Activated naive CD4-positive, alpha-beta T cell treated with anti-CD3 and anti-CD28 coated beads for 36 hours (primary cell): ENCODE measurements at regions of chr22 and their contacts with region 1.

Region 1: GRCh38 chr22:38506118-38506962 is at the start of gene DDX17:
- DNase-seq: peak; percentile 97
- H3K4me3 Mint-ChIP-seq: peak within 1 kb of the TSS; percentile 98
- H3K27ac Mint-ChIP-seq: peak within 1 kb of the TSS; percentile 100
- H3K4me1 Mint-ChIP-seq: peaks cover 36% of the 10 kb centered on the region
- H3K27me3 Mint-ChIP-seq: no peaks in the 10 kb centered on the region
- total RNA-seq, gene DDX17: 319 to 341 TPM

Region 2: GRCh38 chr22:38490915-38491314 is 15.4 kb before region 1 on chr22:
- CTCF ChIA-PET with region 1: no interaction called
- intact Hi-C with region 1: loop called (anchors 1 kb)
- DNase-seq: no peak
- H3K4me3 Mint-ChIP-seq: no peak overlapping the region
- H3K27ac Mint-ChIP-seq: peak overlapping the region; percentile 87
- H3K4me1 Mint-ChIP-seq: peaks cover 70% of the 10 kb centered on the region
- H3K27me3 Mint-ChIP-seq: no peaks in the 10 kb centered on the region

Region 3: GRCh38 chr22:38531251-38531938 is 25.1 kb after region 1 on chr22:
- CTCF ChIA-PET with region 1: interaction called, 4 read pairs
- intact Hi-C with region 1: loop called (anchors 1 kb)
- DNase-seq: no peak
- H3K4me3 Mint-ChIP-seq: peak overlapping the region; percentile 55
- H3K27ac Mint-ChIP-seq: peak overlapping the region; percentile 93
- H3K4me1 Mint-ChIP-seq: peaks cover 18% of the 10 kb centered on the region
- H3K27me3 Mint-ChIP-seq: no peaks in the 10 kb centered on the region